CD4-positive, alpha-beta T cell (primary cell): ENCODE measurements at regions of chr10 and their contacts with region 1.

Region 1: GRCh38 chr10:91711885-91712680 is 79.2 kb upstream of the PPP1R3C start:
- DNase-seq: no peak
- ATAC-seq: no peak
- H3K4me3 ChIP-seq: no peak overlapping the region
- H3K4me3 Mint-ChIP-seq: no peak overlapping the region
- H3K27ac ChIP-seq: no peak overlapping the region
- H3K27ac Mint-ChIP-seq: no peak overlapping the region
- H3K4me1 ChIP-seq: no peaks in the 10 kb centered on the region
- H3K4me1 Mint-ChIP-seq: no peaks in the 10 kb centered on the region
- H3K27me3 ChIP-seq: peaks cover 7 to 12% of the 10 kb centered on the region in 2 experiments
- H3K27me3 Mint-ChIP-seq: peaks cover 37% of the 10 kb centered on the region
- CTCF ChIP-seq: no peak

Region 2: GRCh38 chr10:91077549-91078071 is 634.5 kb before region 1 on chr10:
- CTCF ChIA-PET with region 1: no interaction called
- POLR2A ChIA-PET with region 1: no interaction called
- intact Hi-C with region 1: loop called in 1 of 2 experiments (anchors 10 kb)
- DNase-seq: no peak
- ATAC-seq: no peak
- H3K4me3 ChIP-seq: no peak overlapping the region
- H3K4me3 Mint-ChIP-seq: no peak overlapping the region
- H3K27ac ChIP-seq: no peak overlapping the region
- H3K27ac Mint-ChIP-seq: no peak overlapping the region
- H3K4me1 ChIP-seq: no peaks in the 10 kb centered on the region
- H3K4me1 Mint-ChIP-seq: no peaks in the 10 kb centered on the region
- H3K27me3 ChIP-seq: no peaks in the 10 kb centered on the region
- H3K27me3 Mint-ChIP-seq: peaks cover 10% of the 10 kb centered on the region
- CTCF ChIP-seq: no peak